HCT116 (cell line): ENCODE measurements at regions of chr5 and their contacts with region 1.

Region 1: GRCh38 chr5:149852641-149853330 is 91.8 kb downstream of the PDE6A start:
- DNase-seq: peak; percentile 44
- ATAC-seq: peak; percentile 96
- H3K4me3 ChIP-seq: no peak overlapping the region
- H3K27ac ChIP-seq: no peak overlapping the region
- H3K4me1 ChIP-seq: no peaks in the 10 kb centered on the region; a peak in 1 of 4 replicates
- H3K27me3 ChIP-seq: no peaks in the 10 kb centered on the region
- CTCF ChIP-seq: peak; percentile 87 to 93 (median 90)
- POLR2A ChIP-seq: no peak
- RAD21 ChIP-seq: peak; percentile 78

Region 2: GRCh38 chr5:149636851-149637246 is 215.9 kb before region 1 on chr5:
- CTCF ChIA-PET with region 1: interaction called, 14 read pairs
- POLR2A ChIA-PET with region 1: no interaction called
- RAD21 ChIA-PET with region 1: no interaction called
- intact Hi-C with region 1: loop called (anchors 1 kb)
- DNase-seq: peak; percentile 65
- ATAC-seq: peak; percentile 88
- H3K4me3 ChIP-seq: no peak overlapping the region
- H3K27ac ChIP-seq: no peak overlapping the region
- H3K4me1 ChIP-seq: peaks cover 16 to 35% of the 10 kb centered on the region in 2 experiments
- H3K27me3 ChIP-seq: no peaks in the 10 kb centered on the region
- CTCF ChIP-seq: peak; percentile 84 to 97 (median 94)
- POLR2A ChIP-seq: no peak
- RAD21 ChIP-seq: peak; percentile 100

Region 3: GRCh38 chr5:149828161-149828884 is 24.5 kb before region 1 on chr5:
- CTCF ChIA-PET with region 1: interaction called, 22 read pairs
- POLR2A ChIA-PET with region 1: no interaction called
- RAD21 ChIA-PET with region 1: no interaction called
- intact Hi-C with region 1: no loop called
- DNase-seq: peak; percentile 77
- ATAC-seq: peak; percentile 92
- H3K4me3 ChIP-seq: no peak overlapping the region
- H3K27ac ChIP-seq: no peak overlapping the region
- H3K4me1 ChIP-seq: peaks cover 0 to 2% of the 10 kb centered on the region in 2 experiments; a peak in 1 of 4 replicates
- H3K27me3 ChIP-seq: no peaks in the 10 kb centered on the region
- CTCF ChIP-seq: peak; percentile 79 to 95 (median 91)
- POLR2A ChIP-seq: no peak
- RAD21 ChIP-seq: peak; percentile 97

Region 4: GRCh38 chr5:149834246-149834855 is 18.4 kb before region 1 on chr5:
- CTCF ChIA-PET with region 1: interaction called, 30 read pairs
- POLR2A ChIA-PET with region 1: no interaction called
- RAD21 ChIA-PET with region 1: interaction called in 1 of 2 experiments, 5 read pairs
- intact Hi-C with region 1: no loop called
- DNase-seq: peak; percentile 74
- ATAC-seq: peak; percentile 65
- H3K4me3 ChIP-seq: no peak overlapping the region
- H3K27ac ChIP-seq: no peak overlapping the region
- H3K4me1 ChIP-seq: peaks cover 0 to 9% of the 10 kb centered on the region in 2 experiments; a peak in 2 of 4 replicates
- H3K27me3 ChIP-seq: no peaks in the 10 kb centered on the region
- CTCF ChIP-seq: peak; percentile 71 to 83 (median 78); a peak in 5 of 6 replicates
- POLR2A ChIP-seq: no peak
- RAD21 ChIP-seq: peak; percentile 83

Region 5: GRCh38 chr5:149869411-149869821 is 16.6 kb after region 1 on chr5:
- CTCF ChIA-PET with region 1: interaction called, 12 read pairs
- POLR2A ChIA-PET with region 1: no interaction called
- RAD21 ChIA-PET with region 1: no interaction called
- intact Hi-C with region 1: no loop called
- DNase-seq: no peak
- ATAC-seq: no peak
- H3K4me3 ChIP-seq: no peak overlapping the region
- H3K27ac ChIP-seq: no peak overlapping the region
- H3K4me1 ChIP-seq: no peaks in the 10 kb centered on the region
- H3K27me3 ChIP-seq: peaks cover 8% of the 10 kb centered on the region; the same call in 1 of the 2 replicates
- CTCF ChIP-seq: no peak
- POLR2A ChIP-seq: no peak
- RAD21 ChIP-seq: no peak

Region 6: DNA sequence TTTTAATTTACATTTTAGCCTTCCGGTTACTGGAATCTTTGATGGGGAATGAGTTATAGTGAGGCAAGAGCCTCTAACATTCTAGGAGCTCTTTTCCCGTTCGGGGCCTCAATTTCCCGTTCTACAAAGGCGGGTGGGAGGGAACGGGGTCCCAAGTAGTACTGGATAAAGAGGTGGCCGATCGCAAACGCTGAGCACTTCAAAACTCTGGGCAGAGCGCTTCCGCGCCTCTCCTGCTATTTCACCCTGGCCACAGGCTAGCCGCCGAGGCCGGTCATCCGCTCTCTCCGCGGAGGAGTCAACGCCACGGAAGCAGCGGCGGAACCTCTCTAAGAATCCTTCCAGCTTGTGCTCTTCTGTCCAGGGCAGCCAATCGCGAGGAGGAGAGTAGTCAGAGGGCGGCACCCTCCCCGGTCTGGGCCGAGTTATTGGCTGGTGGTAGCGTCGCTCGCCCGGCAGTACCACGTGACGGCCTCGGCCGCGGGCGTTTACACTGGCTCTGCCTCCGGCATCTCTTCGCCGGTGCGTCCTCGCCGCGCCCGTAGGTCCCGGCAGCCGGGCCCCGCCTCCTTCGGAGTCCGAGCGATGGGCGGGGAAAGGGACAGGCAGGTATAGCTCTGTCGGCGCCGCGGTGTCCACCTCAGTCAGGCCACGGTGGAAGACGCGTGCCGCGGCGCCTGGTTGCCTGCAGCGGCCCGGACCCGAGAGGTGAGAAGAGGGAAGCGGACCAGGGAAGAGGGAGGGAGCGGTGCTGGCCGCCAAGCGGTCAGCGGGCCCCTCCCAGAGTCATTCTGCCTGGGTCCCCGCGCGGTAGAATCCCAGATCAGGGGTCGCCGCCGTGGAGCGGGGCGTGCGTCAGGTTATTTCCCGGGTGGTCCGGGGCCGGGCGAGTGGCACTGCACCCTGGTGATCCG is 107.7 kb after region 1 on chr5 and contains the start of gene SLC26A2:
- CTCF ChIA-PET with region 1: interaction called, 13 read pairs
- POLR2A ChIA-PET with region 1: interaction called, 6 read pairs
- RAD21 ChIA-PET with region 1: interaction called in 1 of 2 experiments, 4 read pairs
- intact Hi-C with region 1: no loop called
- DNase-seq: peak; percentile 93
- ATAC-seq: peak; percentile 97
- H3K4me3 ChIP-seq: peak within 1 kb of the TSS; percentile 74
- H3K27ac ChIP-seq: peak within 1 kb of the TSS; percentile 52
- H3K4me1 ChIP-seq: peaks cover 8 to 27% of the 10 kb centered on the region in 2 experiments
- H3K27me3 ChIP-seq: no peaks in the 10 kb centered on the region
- CTCF ChIP-seq: no peak
- POLR2A ChIP-seq: peak; percentile 84
- RAD21 ChIP-seq: no peak
- total RNA-seq, gene SLC26A2: 7.8 TPM

Region 7: DNA sequence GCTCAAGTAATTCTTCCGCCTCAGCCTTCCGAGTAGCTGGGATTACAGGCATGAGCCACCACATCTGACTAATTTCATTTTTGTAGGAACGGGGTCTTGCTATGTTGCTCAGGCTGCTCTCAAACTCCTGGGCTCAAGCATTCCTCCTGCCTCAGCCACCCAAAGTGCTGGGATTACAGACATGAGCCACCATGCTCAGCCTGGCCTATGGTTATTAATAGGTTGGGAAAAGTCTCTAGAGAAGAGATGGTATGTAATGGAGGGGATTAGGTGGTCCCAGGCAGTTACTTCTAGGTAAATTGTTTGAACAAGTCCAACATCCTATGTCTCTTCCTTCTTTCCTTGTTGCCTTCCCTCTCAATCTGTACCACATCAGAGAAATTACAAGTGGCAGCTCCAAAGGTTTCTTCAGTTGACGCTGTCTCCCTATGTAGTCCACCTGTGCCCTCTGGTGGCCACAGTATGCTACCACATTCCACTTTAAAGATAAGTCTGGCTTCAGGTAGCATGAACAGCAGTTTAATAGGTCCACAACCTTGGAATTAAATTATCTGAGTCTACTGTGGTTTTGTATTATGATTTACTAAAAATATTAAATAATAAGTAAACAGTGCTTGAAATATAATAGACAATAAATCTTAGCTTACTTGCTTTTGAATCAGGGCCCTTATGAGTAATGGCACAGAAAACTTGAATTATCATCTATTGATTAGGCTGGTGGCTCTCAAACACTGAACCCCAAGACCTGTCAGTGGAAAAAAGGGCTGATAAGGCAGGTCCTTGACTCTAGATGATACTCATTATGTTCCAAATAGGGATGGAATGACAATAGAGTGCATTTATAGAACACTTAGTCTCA is 138.0 kb after region 1 on chr5:
- CTCF ChIA-PET with region 1: interaction called, 9 read pairs
- POLR2A ChIA-PET with region 1: no interaction called
- RAD21 ChIA-PET with region 1: no interaction called
- intact Hi-C with region 1: loop called (anchors 5 kb)
- DNase-seq: peak; percentile 64
- ATAC-seq: peak; percentile 97
- H3K4me3 ChIP-seq: no peak overlapping the region
- H3K27ac ChIP-seq: no peak overlapping the region
- H3K4me1 ChIP-seq: no peaks in the 10 kb centered on the region
- H3K27me3 ChIP-seq: no peaks in the 10 kb centered on the region
- CTCF ChIP-seq: peak; percentile 81 to 96 (median 88)
- POLR2A ChIP-seq: no peak
- RAD21 ChIP-seq: peak; percentile 98